Activated CD4-positive, alpha-beta memory T cell treated with anti-CD3 and anti-CD28 coated beads, Interleukin-2, amount 10 ng/mL, durations not matched to agents 7 days and 5 days (primary cell): ENCODE measurements at regions of chr16 and their contacts with region 1.

Region 1: DNA sequence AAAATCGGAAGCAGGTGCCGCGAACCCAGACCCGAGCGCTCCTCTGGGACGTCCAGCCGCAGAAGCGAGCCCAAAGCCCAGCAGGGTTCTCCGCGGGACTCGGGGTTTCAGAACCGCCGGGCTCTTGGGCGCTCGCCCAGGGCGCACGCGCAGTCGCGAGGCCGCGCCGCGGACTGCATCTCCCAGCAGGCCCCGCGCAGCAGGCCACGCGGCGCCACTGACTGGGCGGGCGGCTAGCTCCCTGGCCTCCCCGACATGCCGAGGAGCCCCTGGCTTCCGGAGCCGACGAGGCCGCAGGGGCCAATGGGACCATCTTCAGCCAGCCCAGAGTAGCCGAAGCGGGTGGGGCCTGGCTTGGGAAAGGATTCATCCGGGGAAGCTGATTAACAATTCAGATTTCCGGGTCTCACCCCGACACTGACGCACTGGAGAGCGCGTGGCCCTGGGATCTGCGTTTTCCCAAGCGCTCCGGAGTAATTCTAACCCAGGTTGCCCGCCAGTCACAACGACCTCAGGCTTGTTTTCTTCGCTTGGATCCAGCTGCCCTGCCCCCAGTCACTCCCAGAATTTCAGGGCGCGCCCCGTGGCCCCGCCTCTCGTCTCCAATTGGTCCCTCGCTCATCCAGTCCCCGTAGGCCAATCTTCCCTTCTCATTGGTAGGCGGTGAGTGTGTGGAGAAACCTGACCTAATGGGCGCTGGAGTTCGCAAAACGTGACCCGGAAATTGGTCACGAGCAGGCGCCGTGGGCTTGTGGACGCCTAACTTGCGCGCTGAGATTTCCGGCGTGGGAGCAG is at the start of gene ZNF263:
- DNase-seq: peak; percentile 94
- H3K4me3 Mint-ChIP-seq: peak within 1 kb of the TSS; percentile 90
- H3K27ac Mint-ChIP-seq: peak within 1 kb of the TSS; percentile 99
- H3K4me1 Mint-ChIP-seq: peaks cover 32% of the 10 kb centered on the region
- H3K27me3 Mint-ChIP-seq: peaks cover 2% of the 10 kb centered on the region
- total RNA-seq, gene ZNF263: 19.4 to 21.3 TPM

Region 2: DNA sequence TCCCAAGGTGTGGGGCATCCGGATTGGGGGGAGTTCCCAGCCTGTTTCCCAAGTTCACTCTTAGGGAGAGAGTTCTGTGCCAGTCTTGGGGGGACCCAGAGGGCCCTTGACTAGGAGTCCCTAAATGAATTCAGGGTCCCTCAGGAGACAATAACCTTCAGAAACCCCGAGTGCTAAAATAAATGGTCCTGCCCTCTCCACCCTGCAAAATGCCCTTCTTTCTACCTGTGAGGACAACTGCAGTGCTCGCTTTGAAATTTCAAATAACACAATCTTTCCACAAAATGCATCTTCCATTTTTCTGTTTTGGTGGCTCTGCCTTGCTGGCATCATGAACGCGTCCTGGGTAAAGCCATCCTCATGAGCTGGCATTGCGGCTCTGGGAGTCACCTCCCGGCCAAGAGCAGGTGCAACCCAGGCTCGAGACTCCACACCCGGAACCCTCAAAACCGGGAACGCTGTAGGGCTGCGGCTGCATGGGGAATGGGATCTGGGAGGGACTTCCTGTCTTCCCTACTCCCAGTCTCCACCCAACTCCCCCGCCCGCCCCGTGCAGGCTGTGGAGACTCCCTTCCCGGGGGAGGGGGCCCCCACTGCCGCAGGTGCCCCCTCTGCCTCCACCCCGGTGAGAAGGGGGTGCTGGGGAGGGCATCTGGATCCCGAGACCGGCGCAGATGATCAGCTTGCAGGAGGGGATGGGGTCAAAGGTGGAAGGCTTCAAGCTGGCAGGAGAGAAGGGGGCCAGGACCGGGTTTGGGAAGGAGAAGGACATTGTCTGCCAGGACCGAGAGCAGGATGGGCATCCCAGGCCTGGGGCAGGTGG is 170.7 kb before region 1 on chr16 and contains the start of gene ZNF205:
- CTCF ChIA-PET with region 1: no interaction called
- POLR2A ChIA-PET with region 1: no interaction called
- DNase-seq: no peak
- H3K4me3 Mint-ChIP-seq: no peak within 1 kb of the TSS
- H3K27ac Mint-ChIP-seq: no peak within 1 kb of the TSS
- H3K4me1 Mint-ChIP-seq: peaks cover 4% of the 10 kb centered on the region
- H3K27me3 Mint-ChIP-seq: peaks cover 27% of the 10 kb centered on the region
- total RNA-seq, gene ZNF205: not detected

Region 3: GRCh38 chr16:3158471-3159314 is 124.2 kb before region 1 on chr16:
- CTCF ChIA-PET with region 1: no interaction called
- POLR2A ChIA-PET with region 1: interaction called, 13 read pairs
- DNase-seq: peak; percentile 96
- H3K4me3 Mint-ChIP-seq: peak overlapping the region; percentile 91
- H3K27ac Mint-ChIP-seq: peak overlapping the region; percentile 95
- H3K4me1 Mint-ChIP-seq: peaks cover 44% of the 10 kb centered on the region
- H3K27me3 Mint-ChIP-seq: peaks cover 23% of the 10 kb centered on the region

Region 4: GRCh38 chr16:3234543-3235541 is 48.1 kb before region 1 on chr16 and contains the start of gene ZNF200:
- CTCF ChIA-PET with region 1: no interaction called
- POLR2A ChIA-PET with region 1: interaction called, 28 read pairs
- DNase-seq: peak; percentile 95
- H3K4me3 Mint-ChIP-seq: peak within 1 kb of the TSS; percentile 83
- H3K27ac Mint-ChIP-seq: peak within 1 kb of the TSS; percentile 97
- H3K4me1 Mint-ChIP-seq: peaks cover 31% of the 10 kb centered on the region
- H3K27me3 Mint-ChIP-seq: no peaks in the 10 kb centered on the region
- total RNA-seq, gene ZNF200: 13.1 to 14.9 TPM

Region 5: DNA sequence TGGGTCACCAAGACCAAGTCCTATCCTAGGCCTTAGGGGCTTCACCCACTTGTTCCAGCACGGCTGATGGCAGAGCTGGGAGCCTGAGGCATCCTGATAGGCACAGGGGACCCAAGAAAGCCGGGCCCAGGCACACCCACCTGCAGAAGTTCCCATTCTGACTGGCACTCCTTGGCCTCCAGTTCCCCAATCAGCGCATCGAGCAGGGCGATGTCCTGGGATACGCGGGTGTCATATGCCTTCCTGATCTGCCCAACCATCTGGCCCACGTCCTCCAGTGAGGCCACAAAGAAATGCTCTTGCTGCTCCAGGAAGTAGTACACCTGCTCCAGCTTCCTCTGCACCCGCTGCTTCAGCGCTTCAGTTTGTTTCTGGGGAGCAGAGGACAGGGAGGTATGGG is 36.1 kb before region 1 on chr16:
- CTCF ChIA-PET with region 1: no interaction called
- POLR2A ChIA-PET with region 1: no interaction called
- DNase-seq: no peak
- H3K4me3 Mint-ChIP-seq: no peak overlapping the region
- H3K27ac Mint-ChIP-seq: no peak overlapping the region
- H3K4me1 Mint-ChIP-seq: no peaks in the 10 kb centered on the region
- H3K27me3 Mint-ChIP-seq: no peaks in the 10 kb centered on the region

Region 6: GRCh38 chr16:3264137-3265036 is 18.5 kb before region 1 on chr16:
- CTCF ChIA-PET with region 1: interaction called, 11 read pairs
- POLR2A ChIA-PET with region 1: interaction called, 67 read pairs
- DNase-seq: peak; percentile 96
- H3K4me3 Mint-ChIP-seq: peak overlapping the region; percentile 80
- H3K27ac Mint-ChIP-seq: peak overlapping the region; percentile 97
- H3K4me1 Mint-ChIP-seq: peaks cover 30% of the 10 kb centered on the region
- H3K27me3 Mint-ChIP-seq: no peaks in the 10 kb centered on the region

Region 7: DNA sequence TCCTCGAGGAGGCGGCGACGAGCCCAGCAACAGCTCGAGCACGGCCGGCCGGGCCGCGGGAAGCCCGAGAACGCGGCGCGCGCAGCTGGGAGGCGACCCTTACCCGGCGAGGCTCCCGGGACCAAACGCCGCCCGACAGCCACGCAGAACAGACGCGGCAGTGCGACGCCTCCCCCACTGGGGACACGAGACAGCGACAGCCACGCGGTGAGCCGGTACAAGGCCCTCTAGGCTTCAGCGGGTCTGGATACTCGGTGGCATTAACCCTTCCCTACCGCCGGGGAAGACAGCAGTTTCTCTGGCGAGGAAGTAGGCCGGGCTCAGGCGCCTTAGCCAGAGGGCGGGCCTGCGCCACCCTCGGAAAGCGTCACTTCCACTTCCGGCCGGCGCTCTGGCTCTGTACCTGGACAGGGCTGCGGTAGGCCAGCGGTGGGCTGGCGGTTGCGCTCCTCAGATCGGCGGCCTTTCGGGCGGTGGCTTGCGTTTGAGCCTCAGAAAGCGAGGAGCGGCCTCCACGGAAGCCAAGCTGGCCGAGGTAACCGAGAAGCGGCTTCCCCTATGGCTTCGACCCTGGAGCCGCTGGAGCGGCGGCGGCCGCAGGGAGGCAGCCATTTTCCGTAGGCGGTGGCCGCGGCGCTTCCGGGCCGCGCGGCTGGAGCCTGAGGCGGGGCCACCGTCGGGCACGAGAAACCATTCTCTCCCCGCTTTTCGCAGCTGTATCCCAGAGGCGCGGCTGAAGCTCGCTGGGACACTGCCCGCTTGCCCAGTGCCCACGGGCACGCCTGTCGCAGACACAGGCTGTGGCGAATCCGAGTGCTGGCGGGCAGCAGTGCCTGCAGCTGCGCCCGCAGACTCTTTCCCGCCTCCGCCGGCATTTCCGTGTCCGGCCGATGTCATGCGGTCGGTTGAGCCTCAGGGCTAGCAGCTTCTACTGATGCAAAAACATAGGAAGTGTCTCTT is 22.5 kb after region 1 on chr16 and contains the starts of genes TIGD7 and ZNF75A:
- CTCF ChIA-PET with region 1: interaction called, 3 read pairs
- POLR2A ChIA-PET with region 1: interaction called, 60 read pairs
- DNase-seq: peak; percentile 86
- H3K4me3 Mint-ChIP-seq: peak within 1 kb of the TSS; percentile 73
- H3K27ac Mint-ChIP-seq: peak within 1 kb of the TSS; percentile 70
- H3K4me1 Mint-ChIP-seq: peaks cover 17% of the 10 kb centered on the region
- H3K27me3 Mint-ChIP-seq: no peaks in the 10 kb centered on the region
- total RNA-seq, gene TIGD7: 5.4 to 7.6 TPM
- total RNA-seq, gene ZNF75A: 34.2 to 36.7 TPM

Region 8: GRCh38 chr16:3358884-3359283 is 76.0 kb after region 1 on chr16:
- CTCF ChIA-PET with region 1: no interaction called
- POLR2A ChIA-PET with region 1: no interaction called
- DNase-seq: no peak
- H3K4me3 Mint-ChIP-seq: no peak overlapping the region
- H3K27ac Mint-ChIP-seq: no peak overlapping the region
- H3K4me1 Mint-ChIP-seq: peaks cover 2% of the 10 kb centered on the region
- H3K27me3 Mint-ChIP-seq: peaks cover 4% of the 10 kb centered on the region

Region 9: DNA sequence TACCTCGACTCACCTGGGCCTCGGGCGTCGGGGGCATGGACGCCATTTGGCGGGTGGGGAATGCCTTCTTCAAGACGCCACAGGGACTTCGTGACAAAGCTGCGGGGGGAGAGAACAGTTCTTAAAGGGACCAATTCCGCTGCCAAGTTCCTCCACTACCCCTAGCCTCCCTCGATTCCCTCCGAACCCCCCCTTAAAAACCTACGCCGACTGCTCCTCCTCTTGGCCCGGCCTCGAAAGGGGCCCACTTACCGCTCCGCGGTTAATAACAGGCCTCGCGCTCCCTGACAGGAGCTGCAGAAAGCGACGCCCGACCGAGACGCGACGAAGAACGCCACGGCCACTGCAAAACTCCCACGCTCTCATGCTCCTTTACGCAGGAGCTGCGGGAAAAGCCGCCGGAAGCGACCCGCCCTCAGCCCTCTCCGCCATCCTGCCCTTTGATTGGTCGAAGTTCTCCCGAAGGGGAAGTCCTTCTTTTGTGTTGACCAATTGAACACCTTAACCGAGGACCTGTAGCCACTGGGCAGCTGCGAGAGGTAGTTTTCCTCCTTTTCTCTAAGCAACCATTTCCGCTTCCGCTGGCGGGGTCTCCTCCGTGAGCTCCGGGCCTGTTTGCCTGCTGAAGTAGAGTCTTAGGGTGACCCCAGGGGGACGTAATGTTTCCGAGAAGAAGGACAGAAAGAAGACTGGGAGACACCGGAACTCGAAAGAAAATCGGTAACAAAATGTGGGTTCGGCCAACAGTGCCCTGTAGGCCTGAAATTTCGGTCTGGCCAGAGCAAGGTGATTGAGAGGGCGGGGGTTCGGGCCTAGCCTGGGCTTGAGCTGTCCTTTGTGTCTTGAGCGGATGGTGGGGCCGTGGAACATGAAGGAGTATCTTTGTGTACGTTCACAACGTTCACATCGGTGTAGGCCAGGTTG is 160.4 kb after region 1 on chr16 and contains the starts of genes NAA60 and ZNF597:
- CTCF ChIA-PET with region 1: interaction called, 5 read pairs
- POLR2A ChIA-PET with region 1: interaction called, 15 read pairs
- DNase-seq: peak; percentile 80
- H3K4me3 Mint-ChIP-seq: peak within 1 kb of the TSS; percentile 83
- H3K27ac Mint-ChIP-seq: peak within 1 kb of the TSS; percentile 87
- H3K4me1 Mint-ChIP-seq: peaks cover 19% of the 10 kb centered on the region
- H3K27me3 Mint-ChIP-seq: no peaks in the 10 kb centered on the region
- total RNA-seq, gene NAA60: 46.1 to 46.4 TPM
- total RNA-seq, gene ZNF597: 2.1 to 2.2 TPM

Region 10: DNA sequence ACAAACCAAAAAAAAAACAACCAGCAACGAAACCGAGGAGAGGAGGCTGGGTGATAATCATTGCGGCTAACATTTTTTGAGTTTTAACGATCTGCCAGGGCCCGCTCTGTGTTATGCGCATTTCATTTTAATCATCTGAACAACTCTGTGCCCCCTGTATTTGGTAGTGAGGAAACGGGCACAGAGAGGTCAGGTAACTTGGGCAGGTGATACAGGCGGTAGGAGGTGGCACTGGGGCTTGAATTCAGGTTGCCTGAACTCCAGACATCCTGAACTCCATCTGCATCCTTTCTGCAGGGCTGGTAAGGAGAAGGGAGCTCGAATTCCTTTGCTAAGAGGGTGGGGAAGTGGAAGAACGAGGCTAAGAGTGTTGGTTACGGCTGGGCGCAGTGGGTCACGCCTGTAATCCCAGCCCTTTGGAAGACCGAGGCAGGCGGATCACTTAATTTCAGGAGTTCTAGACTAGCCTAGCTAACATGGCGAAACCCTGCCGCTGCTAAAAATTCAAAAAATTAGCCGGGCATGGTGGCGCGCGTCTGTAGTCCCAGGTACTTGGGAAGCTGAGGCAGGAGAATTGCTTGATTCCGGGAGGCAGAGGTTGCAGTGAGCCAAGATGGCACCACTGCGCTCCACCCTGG is 219.0 kb after region 1 on chr16:
- CTCF ChIA-PET with region 1: no interaction called
- POLR2A ChIA-PET with region 1: interaction called, 10 read pairs
- DNase-seq: no peak
- H3K4me3 Mint-ChIP-seq: peak overlapping the region; percentile 91
- H3K27ac Mint-ChIP-seq: peak overlapping the region; percentile 96
- H3K4me1 Mint-ChIP-seq: peaks cover 62% of the 10 kb centered on the region
- H3K27me3 Mint-ChIP-seq: peaks cover 3% of the 10 kb centered on the region